Heart left ventricle (tissue), 16 donors: ENCODE measurements at regions of chr12 and their contacts with region 1.

Region 1: DNA sequence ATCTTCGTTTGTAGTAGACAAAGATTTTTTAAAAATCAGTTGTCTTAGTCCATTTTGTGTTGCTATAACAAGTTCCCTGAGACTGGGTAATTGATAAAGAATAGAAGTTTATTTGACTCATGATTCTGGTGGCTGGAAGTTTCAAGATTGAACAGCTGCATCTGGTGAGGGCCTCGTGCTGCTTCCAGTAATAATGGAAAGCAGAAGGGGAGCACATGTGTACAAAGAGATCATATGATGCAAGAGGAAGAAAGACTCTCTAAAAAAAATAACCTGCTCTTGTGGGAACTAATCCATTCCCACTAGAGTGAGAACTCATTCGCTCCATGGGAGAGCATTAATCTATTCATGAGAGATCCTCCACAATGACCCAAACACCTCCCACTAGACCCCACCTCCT is 24.8 kb downstream of the MUCL1 start:
- DNase-seq: no peak
- ATAC-seq: no peak
- H3K4me3 ChIP-seq: no peak overlapping the region
- H3K27ac ChIP-seq: no peak overlapping the region
- H3K4me1 ChIP-seq: peaks cover 0 to 3% (median 0%) of the 10 kb centered on the region in 12 donors
- H3K27me3 ChIP-seq: no peaks in the 10 kb centered on the region
- CTCF ChIP-seq: no peak
- POLR2A ChIP-seq: no peak

Region 2: GRCh38 chr12:54861927-54862326 is 17.2 kb before region 1 on chr12:
- intact Hi-C with region 1: loop called in 1 of 10 experiments (anchors 2 kb)
- DNase-seq: no peak
- ATAC-seq: no peak
- H3K4me3 ChIP-seq: no peak overlapping the region
- H3K27ac ChIP-seq: no peak overlapping the region
- H3K4me1 ChIP-seq: peaks cover 0 to 5% (median 0%) of the 10 kb centered on the region in 12 donors
- H3K27me3 ChIP-seq: peaks cover 0 to 7% (median 0%) of the 10 kb centered on the region in 9 donors
- CTCF ChIP-seq: no peak
- POLR2A ChIP-seq: no peak